AG04449 (cell line): ENCODE measurements at regions of chr6 and their contacts with region 1.

Region 1: DNA sequence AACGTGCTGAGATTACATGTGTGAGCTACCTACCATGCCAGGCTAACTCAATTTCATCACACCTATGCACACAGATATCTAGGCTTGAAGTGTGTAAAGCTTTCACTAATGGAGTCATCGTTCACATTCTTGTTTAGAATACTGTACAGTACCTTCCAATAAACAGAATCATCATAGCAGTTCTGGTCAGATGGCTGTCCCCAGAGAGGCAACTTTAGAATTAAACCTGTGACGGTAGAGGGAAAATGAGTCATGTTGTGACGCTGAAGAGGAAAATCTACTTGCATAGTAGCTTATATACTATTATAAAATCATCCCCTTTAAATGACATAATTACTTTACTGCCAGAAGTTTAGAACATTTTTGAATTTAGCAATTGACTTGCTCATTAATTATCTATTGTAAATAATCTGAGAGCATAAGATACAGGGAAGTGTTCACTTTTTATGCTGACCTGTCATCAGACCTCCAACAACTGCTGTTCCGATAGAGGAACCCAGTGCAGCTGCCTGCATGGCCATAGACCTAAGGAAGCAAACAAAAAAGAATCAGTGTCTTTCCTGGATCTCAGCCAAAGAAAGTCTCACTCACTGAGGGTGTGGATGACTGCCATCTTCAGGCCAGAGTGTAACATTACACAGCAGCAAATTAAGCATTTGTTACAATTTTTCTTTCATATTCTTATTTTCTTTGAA is 29.8 kb downstream of the RHAG start:
- DNase-seq: peak; percentile 29
- H3K4me3 ChIP-seq: no peak overlapping the region
- CTCF ChIP-seq: peak; percentile 81

Region 2: GRCh38 chr6:49284180-49284579 is 322.7 kb before region 1 on chr6:
- CTCF ChIA-PET with region 1: no interaction called
- POLR2A ChIA-PET with region 1: no interaction called
- DNase-seq: no peak
- H3K4me3 ChIP-seq: no peak overlapping the region
- CTCF ChIP-seq: no peak

Region 3: GRCh38 chr6:49453221-49453620 is 153.6 kb before region 1 on chr6:
- CTCF ChIA-PET with region 1: interaction called, 11 read pairs
- POLR2A ChIA-PET with region 1: no interaction called
- DNase-seq: no peak
- H3K4me3 ChIP-seq: no peak overlapping the region
- CTCF ChIP-seq: no peak

Region 4: GRCh38 chr6:49625140-49625539 is 18.3 kb after region 1 on chr6:
- CTCF ChIA-PET with region 1: interaction called, 12 read pairs
- POLR2A ChIA-PET with region 1: no interaction called
- DNase-seq: no peak
- H3K4me3 ChIP-seq: no peak overlapping the region
- CTCF ChIP-seq: no peak